ENCODE measurements at regions of chr3 and their contacts with region 1.

Region 1: DNA sequence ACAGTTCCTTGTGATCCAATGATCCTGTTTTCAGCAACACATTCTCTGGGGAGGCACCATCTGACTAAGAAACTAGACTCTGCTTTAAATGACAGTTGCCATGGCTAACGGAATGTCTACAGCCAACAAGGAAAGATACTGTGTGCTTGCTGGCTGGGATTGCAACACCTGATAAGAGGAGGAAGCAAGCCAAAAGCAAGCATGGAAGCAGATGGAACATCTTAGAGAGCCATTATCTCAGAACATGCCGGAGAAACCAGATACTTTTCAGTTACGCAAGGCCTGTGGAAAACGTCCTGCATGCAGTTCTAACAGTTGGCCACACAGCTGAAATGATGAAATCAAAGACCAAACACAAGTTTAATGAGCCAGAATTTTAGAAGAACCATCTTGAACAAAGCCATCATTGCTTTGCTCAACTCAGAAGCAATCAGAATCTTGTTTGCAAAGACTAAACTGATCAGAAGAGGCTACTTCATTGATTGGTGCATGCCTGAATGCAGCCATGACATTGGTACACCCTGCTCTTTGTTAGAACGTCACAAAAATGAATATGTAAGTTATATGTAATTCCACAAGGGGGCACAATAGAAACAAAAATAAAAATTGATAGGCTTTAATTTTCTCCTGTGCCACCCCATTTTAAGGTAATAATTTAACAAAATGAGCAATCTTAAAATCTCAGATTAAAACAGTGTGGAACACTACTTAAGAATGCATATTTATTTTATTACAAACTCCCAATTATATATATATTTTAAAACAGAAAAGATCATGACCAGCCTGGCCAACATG is 50.8 kb downstream of the GXYLT2 start:
- DNase-seq: peak; percentile 46
- ATAC-seq: peak; percentile 90
- H3K4me3 ChIP-seq: no peak overlapping the region
- H3K27ac ChIP-seq: no peak overlapping the region
- H3K4me1 ChIP-seq: no peaks in the 10 kb centered on the region
- H3K27me3 ChIP-seq: no peaks in the 10 kb centered on the region
- CTCF ChIP-seq: peak; percentile 60; the same call in 1 of the 2 replicates

Region 2: DNA sequence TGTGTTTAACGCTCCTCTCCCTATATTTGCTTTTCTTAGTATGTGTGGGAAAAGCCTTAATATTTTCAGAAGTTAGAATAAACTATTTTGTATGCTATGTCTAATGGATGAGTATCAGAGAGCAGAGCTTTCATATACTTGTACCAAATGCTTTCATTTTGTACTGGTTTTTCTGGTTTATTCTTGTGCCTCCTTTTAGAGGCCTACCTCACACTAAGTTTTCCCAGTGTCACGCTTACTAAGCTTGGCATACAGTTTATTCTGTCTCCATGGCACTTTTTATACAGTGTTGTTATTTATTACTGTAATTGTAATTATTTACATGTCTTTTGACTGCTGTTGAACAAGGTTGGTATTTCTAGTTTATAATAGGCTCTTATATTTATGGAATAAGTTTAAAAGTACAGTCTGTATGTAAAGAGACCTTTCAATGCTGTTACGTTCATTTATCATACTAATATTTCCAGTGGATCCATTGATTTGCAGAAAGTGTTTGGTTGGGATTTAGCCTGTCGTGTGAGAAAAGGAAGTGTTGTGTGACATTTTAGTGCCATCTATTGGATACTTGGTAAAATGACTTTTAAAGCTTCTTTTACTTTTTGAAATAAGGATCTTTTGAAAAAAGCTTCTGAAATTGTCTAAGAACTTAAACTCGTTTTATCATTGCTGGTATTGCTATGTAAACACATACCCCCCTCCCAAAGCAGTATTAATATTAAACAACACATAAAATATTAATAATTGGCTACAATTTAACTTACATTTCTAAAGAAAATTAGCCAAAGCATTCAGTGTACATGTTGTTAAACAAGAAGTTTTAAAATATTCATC is 117.6 kb after region 1 on chr3:
- CTCF ChIA-PET with region 1: interaction called, 7 read pairs
- POLR2A ChIA-PET with region 1: interaction called, 6 read pairs
- in situ Hi-C with region 1: no loop called
- intact Hi-C with region 1: loop called (anchors 5 kb)
- DNase-seq: peak; percentile 7
- ATAC-seq: peak; percentile 38; the same call in 1 of the 2 replicates
- H3K4me3 ChIP-seq: no peak overlapping the region
- H3K27ac ChIP-seq: no peak overlapping the region
- H3K4me1 ChIP-seq: no peaks in the 10 kb centered on the region; the same call in 1 of the 2 replicates
- H3K27me3 ChIP-seq: no peaks in the 10 kb centered on the region
- CTCF ChIP-seq: peak; percentile 53; the same call in 1 of the 2 replicates

Region 3: GRCh38 chr3:73080216-73080966 is 141.7 kb after region 1 on chr3:
- CTCF ChIA-PET with region 1: interaction called, 13 read pairs
- POLR2A ChIA-PET with region 1: no interaction called
- in situ Hi-C with region 1: no loop called
- intact Hi-C with region 1: loop called (anchors 10 kb)
- DNase-seq: no peak
- ATAC-seq: no peak
- H3K4me3 ChIP-seq: no peak overlapping the region
- H3K27ac ChIP-seq: no peak overlapping the region
- H3K4me1 ChIP-seq: no peaks in the 10 kb centered on the region
- H3K27me3 ChIP-seq: no peaks in the 10 kb centered on the region
- CTCF ChIP-seq: no peak

Region 4: DNA sequence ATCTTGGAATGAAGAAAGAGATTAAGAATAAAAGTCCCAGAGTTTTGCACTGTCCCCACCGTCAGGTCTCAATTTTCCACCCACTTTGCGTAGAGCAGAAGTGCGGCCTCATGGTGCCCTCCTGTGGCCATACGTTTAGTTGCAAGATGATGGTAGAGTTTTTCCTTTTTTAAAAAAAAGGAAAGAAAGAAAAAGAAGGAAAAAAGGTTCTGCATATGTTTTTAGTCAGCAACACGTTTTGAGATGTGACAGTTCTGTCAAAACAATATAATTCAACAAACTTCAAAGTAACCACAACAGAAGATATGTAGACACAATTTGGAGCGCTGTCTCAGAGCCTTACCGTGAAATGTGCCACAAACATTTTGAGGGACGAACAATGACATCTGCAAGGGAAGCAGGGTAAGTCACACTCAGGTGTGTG is 147.4 kb after region 1 on chr3:
- CTCF ChIA-PET with region 1: interaction called, 13 read pairs
- POLR2A ChIA-PET with region 1: no interaction called
- in situ Hi-C with region 1: no loop called
- intact Hi-C with region 1: loop called (anchors 10 kb)
- DNase-seq: no peak
- ATAC-seq: peak; percentile 73
- H3K4me3 ChIP-seq: no peak overlapping the region
- H3K27ac ChIP-seq: no peak overlapping the region
- H3K4me1 ChIP-seq: no peaks in the 10 kb centered on the region
- H3K27me3 ChIP-seq: no peaks in the 10 kb centered on the region
- CTCF ChIP-seq: peak; percentile 79

Region 5: DNA sequence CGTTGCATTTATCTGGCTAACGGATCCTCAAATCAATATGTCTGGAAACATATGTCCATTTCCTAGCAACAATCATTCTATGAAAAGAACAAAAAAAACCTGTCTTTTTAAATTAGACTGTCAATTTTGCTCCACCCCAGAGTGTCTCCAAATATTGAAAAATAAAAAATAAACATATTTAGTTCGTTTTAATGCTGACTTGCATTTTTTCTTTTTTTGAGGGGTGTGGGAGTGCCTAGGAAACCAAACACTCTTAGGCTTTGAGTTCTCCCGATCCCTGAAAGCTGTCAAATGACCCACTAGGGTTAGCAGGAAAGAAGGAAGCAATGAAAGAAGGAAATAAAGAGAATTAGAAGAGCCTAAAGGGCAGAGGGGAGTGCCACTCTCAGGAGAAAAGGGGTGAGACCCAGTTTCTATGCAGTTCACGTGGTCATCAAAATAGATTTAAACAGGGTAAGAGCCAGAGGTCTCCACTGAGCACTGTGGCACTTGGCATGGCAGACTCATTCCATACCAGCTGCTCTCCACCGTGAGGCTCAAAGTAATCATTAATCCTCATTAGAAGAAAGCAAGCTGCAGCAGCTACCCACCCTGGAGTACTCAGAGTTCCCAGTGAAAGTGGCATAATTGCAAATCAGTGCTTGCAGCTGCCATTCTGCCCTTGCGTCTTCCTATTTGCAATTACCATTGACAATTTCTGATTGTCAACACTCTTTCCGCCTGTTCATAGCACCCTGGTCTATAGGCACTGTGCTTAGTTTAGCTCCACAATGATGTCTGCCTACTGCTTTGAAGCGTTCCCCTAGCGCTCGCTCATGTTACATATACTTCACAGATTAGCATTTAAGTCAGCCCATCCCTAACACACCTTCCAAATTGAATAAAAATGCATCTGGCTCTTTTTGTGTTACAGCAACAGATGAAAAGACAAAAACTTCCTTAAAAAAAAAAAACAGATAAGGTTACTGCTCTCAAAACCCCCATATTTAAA is 653.8 kb after region 1 on chr3:
- CTCF ChIA-PET with region 1: no interaction called
- POLR2A ChIA-PET with region 1: no interaction called
- in situ Hi-C with region 1: no loop called
- intact Hi-C with region 1: no loop called
- DNase-seq: no peak
- ATAC-seq: no peak
- H3K4me3 ChIP-seq: no peak overlapping the region
- H3K27ac ChIP-seq: no peak overlapping the region
- H3K4me1 ChIP-seq: no peaks in the 10 kb centered on the region
- H3K27me3 ChIP-seq: no peaks in the 10 kb centered on the region
- CTCF ChIP-seq: no peak